AG04450 (cell line): ENCODE measurements at regions of chr4 and their contacts with region 1.

Region 1: DNA sequence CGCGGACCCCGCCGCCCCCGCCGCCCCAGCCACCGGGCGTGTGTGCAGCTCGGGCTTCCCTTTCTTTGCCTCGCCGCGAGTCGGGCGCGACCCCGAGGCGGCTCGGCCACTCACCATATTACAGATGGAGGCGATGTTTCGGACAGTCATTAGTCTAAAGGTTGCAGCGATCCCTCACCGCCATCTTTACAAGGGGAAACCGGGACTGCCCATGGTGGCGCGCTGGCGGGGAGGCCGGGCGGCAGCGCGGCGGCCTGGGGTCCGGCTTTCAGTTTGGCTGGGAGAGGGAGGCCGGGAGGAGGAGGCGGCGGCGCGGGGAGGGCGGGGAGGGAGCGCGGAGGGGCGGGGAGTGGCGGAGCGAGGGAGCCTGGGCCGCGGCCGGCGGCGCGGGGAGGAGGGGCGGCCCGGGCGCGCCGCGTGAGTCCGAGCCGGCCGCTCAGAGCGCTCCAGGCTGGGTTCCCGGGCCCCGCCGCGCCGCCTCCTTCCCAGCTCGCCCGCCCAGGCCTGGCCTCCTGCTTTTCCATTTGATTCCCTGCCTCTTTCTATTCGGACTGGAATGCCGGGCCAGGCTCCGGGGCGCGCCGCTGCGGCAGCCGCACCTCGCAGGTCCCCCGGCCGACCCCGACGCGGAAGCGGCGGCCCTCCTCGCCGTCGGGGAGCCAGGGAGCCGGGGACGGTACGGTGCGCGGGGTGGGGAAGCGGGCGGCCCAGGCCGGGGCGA is at the start of gene USP46:
- DNase-seq: peak; percentile 24
- H3K4me3 ChIP-seq: peak within 1 kb of the TSS; percentile 77
- H3K27ac ChIP-seq: peak within 1 kb of the TSS; percentile 80
- H3K27me3 ChIP-seq: no peaks in the 10 kb centered on the region
- CTCF ChIP-seq: no peak
- polyA plus RNA-seq, gene USP46: 66.6 and 69.1 TPM in 2 replicates

Region 2: GRCh38 chr4:52712172-52712990 is 53.2 kb after region 1 on chr4:
- CTCF ChIA-PET with region 1: no interaction called
- POLR2A ChIA-PET with region 1: interaction called, 16 read pairs
- DNase-seq: peak; percentile 81
- H3K4me3 ChIP-seq: peak overlapping the region; percentile 90
- H3K27ac ChIP-seq: peak overlapping the region; percentile 33
- H3K27me3 ChIP-seq: peaks cover 2% of the 10 kb centered on the region
- CTCF ChIP-seq: no peak